ENCODE measurements at regions of chr2 and their contacts with region 1.

Region 1: GRCh38 chr2:233443468-233444183 is 89.3 kb downstream of the DGKD start:
- DNase-seq: peak; percentile 86
- H3K4me3 ChIP-seq: no peak overlapping the region
- H3K27ac ChIP-seq: no peak overlapping the region
- H3K4me1 ChIP-seq: no peaks in the 10 kb centered on the region
- CTCF ChIP-seq: peak; percentile 97

Region 2: DNA sequence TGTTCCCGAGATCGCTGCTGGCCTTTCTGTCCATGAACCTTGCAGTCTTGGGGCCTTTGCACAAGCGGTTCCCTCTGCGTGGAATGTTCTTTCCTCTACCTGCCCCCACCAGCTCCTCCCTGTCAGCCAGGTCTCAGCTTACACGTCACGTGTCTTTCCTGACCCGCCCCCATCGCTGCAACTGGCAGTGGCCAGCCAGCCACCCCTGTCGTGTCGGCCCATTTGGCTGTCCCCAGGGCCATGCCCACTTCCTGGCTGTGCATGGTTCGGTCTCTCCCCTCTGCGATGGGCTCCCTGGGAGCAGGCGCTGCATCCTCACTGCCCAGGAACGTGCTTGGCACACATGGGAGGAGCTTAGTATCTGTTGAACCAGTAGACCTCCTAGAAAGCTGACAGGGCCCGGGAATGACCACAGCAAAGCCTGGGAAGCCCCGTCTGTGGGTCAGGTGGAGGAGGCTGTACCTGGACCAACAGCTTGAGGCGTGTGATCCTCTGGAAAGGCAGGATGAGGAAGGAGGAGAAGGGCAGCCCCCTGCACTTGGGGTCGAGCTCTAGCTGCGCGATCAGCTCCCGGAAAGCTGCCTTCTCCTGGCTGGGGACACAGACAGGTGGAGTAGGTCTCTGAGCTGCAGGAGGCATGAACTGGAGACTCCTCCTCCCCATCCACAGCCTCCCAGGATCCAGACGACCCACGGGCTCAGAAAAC is 552.6 kb before region 1 on chr2:
- CTCF ChIA-PET with region 1: no interaction called
- POLR2A ChIA-PET with region 1: no interaction called
- intact Hi-C with region 1: no loop called
- DNase-seq: no peak
- H3K4me3 ChIP-seq: no peak overlapping the region
- H3K27ac ChIP-seq: no peak overlapping the region
- H3K4me1 ChIP-seq: no peaks in the 10 kb centered on the region
- CTCF ChIP-seq: no peak

Region 3: DNA sequence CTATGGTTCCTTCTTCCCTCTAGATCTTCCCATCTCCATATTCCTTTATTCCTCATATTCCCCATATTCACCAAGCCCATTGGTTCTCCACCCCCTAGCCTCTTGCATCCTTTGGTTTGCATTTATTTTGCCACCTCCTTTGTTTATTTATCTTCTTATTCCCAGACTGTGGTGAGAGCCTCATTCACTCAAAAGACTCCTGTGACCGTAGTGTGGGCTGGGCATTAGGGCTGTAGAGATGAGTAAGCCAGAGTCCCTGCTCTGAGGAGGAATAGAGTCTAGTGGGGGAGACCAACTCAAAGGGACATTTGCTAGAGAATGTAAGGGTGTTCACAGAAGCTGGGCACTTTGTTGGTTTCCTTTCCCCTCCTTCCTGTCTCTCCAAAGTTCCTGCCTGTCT is 183.9 kb before region 1 on chr2:
- CTCF ChIA-PET with region 1: no interaction called
- POLR2A ChIA-PET with region 1: no interaction called
- intact Hi-C with region 1: loop called (anchors 5 kb)
- DNase-seq: no peak
- H3K4me3 ChIP-seq: no peak overlapping the region
- H3K27ac ChIP-seq: no peak overlapping the region
- H3K4me1 ChIP-seq: peaks cover 6% of the 10 kb centered on the region
- CTCF ChIP-seq: no peak

Region 4: DNA sequence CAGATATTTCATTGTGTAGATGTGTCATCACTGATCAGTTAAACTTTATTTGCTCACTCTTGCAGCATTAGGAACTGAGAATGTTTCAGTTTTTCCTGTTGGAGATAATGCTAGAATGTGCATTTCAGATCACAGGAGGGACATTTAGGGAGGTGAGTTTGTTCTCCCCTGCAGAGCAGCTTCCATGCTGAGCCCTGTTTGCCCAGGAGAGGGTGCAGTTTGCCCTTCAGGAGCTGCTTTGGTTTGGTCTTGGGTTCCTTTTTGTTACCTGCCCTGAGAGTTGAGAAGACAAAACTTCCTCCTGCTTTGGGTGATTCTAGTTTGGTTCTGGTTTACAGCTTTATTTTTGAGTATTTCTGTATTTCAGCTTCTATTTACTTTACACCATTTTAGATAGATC is 39.4 kb before region 1 on chr2:
- CTCF ChIA-PET with region 1: interaction called, 3 read pairs
- POLR2A ChIA-PET with region 1: no interaction called
- intact Hi-C with region 1: loop called (anchors 1 kb)
- DNase-seq: peak; percentile 73
- H3K4me3 ChIP-seq: no peak overlapping the region
- H3K27ac ChIP-seq: no peak overlapping the region
- H3K4me1 ChIP-seq: peaks cover 3% of the 10 kb centered on the region
- CTCF ChIP-seq: peak; percentile 97

Region 5: DNA sequence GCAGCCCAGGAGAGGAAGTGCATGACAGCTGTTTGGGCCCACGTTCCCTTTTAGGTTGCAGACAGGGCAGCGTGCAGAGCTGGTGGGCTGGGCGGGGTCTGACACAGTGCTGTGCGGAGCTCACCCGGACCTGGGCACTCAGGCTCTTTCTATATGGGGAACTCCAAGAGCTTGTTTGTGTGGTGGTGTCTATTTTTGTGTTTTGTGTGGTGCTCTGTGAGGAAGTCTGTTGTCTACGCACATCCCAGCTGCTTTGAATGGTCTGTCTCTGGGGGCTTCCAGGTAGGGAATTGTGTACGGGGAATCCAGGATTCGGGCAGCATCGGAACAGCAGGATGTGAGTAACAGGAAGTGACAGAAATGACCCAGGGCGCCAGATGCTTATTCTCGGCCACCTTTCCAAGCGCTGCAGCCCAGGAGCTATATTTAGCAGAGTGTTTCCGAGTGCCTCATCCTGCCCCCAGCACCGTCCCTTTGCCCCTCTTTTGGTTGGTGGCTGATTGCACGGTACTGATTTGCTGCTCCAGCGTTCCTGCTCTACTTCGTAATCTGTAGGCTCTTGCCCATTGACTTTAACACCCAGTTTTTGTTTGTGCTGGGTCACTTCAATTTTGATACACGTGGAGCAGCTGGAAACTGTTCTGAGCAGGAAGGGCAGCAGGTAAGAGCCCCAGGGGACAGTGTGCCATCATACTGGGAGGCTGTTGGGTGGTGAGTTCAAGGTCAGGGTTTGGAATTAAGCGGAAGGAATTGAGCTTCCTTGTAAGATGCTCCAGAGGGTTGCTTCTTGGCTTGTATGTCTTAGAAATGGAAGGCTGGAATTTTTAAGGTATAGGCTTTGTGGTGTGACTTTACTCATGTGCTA is 24.6 kb before region 1 on chr2:
- CTCF ChIA-PET with region 1: interaction called, 3 read pairs
- POLR2A ChIA-PET with region 1: interaction called, 5 read pairs
- intact Hi-C with region 1: loop called (anchors 1 kb)
- DNase-seq: peak; percentile 85
- H3K4me3 ChIP-seq: peak overlapping the region; percentile 61
- H3K27ac ChIP-seq: peak overlapping the region; percentile 69
- H3K4me1 ChIP-seq: peaks cover 72% of the 10 kb centered on the region
- CTCF ChIP-seq: no peak

Region 6: GRCh38 chr2:233460726-233461441 is 17.3 kb after region 1 on chr2:
- CTCF ChIA-PET with region 1: no interaction called
- POLR2A ChIA-PET with region 1: no interaction called
- intact Hi-C with region 1: no loop called
- DNase-seq: no peak
- H3K4me3 ChIP-seq: no peak overlapping the region
- H3K27ac ChIP-seq: no peak overlapping the region
- H3K4me1 ChIP-seq: no peaks in the 10 kb centered on the region
- CTCF ChIP-seq: no peak

Measured in OCI-LY7 (cell line).